AG04450 (cell line): ENCODE measurements at regions of chr3 and their contacts with region 1.

Region 1: DNA sequence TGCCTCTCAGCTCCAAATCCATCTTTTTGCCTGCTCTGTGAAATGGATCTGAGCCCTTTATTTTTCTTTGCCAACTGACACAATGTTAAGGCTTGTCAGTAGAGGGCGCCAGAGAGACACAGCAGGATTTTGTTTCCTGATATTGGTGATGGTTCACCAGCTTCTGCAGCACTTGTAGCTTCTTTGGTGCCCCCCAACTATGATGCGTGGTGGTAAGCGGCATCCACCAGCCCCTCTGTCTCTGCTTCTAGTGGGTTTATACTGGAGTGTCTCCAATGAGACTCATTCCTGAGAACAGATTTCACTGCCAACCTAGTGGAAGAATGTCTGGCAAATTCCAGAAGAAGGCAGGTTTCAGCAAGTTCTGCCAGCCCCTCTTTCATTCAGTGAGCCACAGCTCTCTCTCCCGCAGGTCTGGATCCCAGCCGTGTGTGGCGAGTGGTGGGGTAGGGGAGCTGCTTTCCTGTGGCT is 471.9 kb upstream of the FRG2C start:
- DNase-seq: no peak
- H3K4me3 ChIP-seq: no peak overlapping the region
- H3K27ac ChIP-seq: no peak overlapping the region
- H3K27me3 ChIP-seq: no peaks in the 10 kb centered on the region
- CTCF ChIP-seq: peak; percentile 97

Region 2: DNA sequence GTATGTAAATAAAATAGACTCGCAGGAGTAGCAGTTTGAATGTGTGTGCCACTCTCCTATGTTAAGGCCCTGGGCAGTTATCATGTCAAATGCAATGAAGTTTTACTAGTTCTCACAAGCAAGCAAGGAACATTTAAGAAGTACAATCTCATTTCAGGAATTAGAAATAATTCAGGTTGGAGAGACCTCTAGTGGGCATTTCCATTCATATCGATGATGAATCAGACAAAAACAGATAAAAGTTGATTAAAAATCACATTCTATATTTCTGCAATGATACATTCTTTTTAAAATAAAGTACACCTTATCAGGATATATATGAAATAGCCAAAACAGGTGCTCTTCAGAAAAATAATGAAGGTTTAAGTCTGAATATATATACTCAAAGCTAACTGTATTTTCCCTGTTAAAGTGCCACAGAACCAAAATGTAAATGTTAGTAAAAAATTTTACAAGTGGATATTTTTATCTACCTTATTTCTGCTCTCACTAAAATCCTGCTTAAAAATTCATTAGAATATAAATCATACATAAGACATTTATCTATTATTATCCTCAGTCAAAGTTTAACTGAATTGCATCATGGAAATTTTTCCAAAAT is 20.5 kb before region 1 on chr3:
- CTCF ChIA-PET with region 1: interaction called, 14 read pairs
- POLR2A ChIA-PET with region 1: no interaction called
- DNase-seq: no peak
- H3K4me3 ChIP-seq: no peak overlapping the region
- H3K27ac ChIP-seq: no peak overlapping the region
- H3K27me3 ChIP-seq: no peaks in the 10 kb centered on the region
- CTCF ChIP-seq: peak; percentile 51

Region 3: DNA sequence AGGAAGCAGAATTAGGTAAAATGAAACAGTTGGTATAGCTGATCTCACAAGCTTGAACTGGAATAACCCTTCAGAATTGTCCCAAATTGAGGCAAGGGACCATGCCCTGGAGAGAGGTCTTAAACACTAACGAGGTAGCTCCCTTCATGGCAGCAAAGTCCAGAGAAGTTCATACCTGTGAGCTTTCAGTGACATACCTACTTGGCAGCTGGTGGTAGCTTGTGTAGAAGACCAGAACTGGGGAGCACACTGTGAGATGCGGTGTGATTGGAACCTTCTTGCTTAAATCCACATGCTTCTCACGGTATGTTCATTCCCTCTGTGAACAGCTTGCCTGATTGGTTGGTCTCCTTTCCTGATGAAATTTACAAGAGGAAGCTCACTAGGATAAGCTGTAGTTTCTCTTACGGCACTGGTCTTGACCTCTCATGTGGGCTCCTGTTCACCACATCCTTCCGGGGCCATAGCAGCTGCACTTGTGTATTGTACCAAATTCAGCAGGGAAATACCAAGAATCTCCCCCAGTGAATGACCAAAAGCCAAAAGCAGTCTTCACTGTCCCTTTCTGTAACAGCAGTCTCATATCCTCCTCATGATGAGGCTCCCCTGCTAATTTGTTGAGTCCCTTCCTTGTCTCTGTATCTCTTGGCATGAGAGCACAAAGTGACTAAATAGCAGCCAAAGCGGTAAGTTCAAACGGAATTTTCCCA is 11.8 kb before region 1 on chr3:
- CTCF ChIA-PET with region 1: interaction called, 12 read pairs
- POLR2A ChIA-PET with region 1: no interaction called
- DNase-seq: no peak
- H3K4me3 ChIP-seq: no peak overlapping the region
- H3K27ac ChIP-seq: no peak overlapping the region
- H3K27me3 ChIP-seq: no peaks in the 10 kb centered on the region
- CTCF ChIP-seq: no peak

Region 4: DNA sequence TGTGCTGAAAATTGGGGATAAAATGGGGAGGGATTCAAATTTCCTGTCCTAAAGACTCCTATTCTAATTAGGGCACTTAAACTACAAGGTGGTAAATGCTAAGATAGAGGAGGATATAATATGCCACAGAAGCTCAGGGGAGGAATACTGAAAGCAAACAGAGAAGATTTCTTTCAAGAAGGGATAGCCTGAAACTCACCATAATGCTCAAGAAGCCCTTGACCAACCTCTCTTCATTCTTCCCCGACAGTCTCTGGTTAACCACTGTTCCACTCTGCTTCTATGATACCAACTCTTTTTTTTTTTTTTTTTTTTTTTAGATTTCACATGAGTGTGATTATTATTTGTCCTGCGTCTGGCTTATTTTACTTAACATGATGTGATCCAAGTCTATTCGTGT is 73.7 kb after region 1 on chr3:
- CTCF ChIA-PET with region 1: no interaction called
- POLR2A ChIA-PET with region 1: no interaction called
- DNase-seq: no peak
- H3K4me3 ChIP-seq: no peak overlapping the region
- H3K27ac ChIP-seq: no peak overlapping the region
- H3K27me3 ChIP-seq: peaks cover 2% of the 10 kb centered on the region
- CTCF ChIP-seq: no peak